GM12878 (cell line): ENCODE measurements at regions of chr20 and their contacts with region 1.

Region 1: GRCh38 chr20:39358052-39358451 is 395.9 kb downstream of the DHX35 start:
- DNase-seq: peak; percentile 36
- ATAC-seq: peak; percentile 95
- H3K4me3 ChIP-seq: no peak overlapping the region
- H3K27ac ChIP-seq: no peak overlapping the region
- H3K4me1 ChIP-seq: peaks cover 4% of the 10 kb centered on the region
- H3K27me3 ChIP-seq: no peaks in the 10 kb centered on the region
- CTCF ChIP-seq: no peak
- EP300 ChIP-seq: peak; percentile 35 to 41; a peak in 1 of 4 replicates
- POLR2A ChIP-seq: no peak
- RAD21 ChIP-seq: no peak

Region 2: DNA sequence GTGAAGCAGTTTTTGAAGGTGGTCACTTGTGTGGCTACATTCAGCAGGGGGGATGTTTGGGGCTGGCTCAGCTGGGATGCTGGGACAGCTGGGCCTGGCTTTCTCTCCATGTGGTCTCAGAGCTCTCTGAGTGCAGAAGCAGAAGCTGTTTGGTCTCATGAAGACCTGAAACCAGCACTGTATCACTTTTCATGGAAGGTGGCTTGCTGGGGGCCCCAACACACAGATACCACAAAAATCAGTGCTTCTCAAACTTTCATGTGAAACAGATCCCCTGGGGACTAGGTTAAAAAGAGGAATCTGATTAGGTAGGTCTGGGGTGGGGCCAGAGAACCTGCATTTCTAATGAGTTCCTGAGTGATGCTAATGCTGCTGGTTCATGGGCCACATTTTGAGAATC is 48.6 kb before region 1 on chr20:
- CTCF ChIA-PET with region 1: no interaction called
- POLR2A ChIA-PET with region 1: no interaction called
- RAD21 ChIA-PET with region 1: no interaction called
- SMC1A ChIA-PET with region 1: no interaction called
- in situ Hi-C with region 1: loop called (anchors 5 kb)
- intact Hi-C with region 1: no loop called
- DNase-seq: no peak
- ATAC-seq: no peak
- H3K4me3 ChIP-seq: no peak overlapping the region
- H3K27ac ChIP-seq: no peak overlapping the region
- H3K4me1 ChIP-seq: peaks cover 2% of the 10 kb centered on the region; the same call in 1 of the 2 replicates
- H3K27me3 ChIP-seq: peaks cover 0 to 2% of the 10 kb centered on the region in 2 experiments; a peak in 1 of 4 replicates
- CTCF ChIP-seq: no peak
- EP300 ChIP-seq: no peak
- POLR2A ChIP-seq: no peak
- RAD21 ChIP-seq: no peak

Region 3: DNA sequence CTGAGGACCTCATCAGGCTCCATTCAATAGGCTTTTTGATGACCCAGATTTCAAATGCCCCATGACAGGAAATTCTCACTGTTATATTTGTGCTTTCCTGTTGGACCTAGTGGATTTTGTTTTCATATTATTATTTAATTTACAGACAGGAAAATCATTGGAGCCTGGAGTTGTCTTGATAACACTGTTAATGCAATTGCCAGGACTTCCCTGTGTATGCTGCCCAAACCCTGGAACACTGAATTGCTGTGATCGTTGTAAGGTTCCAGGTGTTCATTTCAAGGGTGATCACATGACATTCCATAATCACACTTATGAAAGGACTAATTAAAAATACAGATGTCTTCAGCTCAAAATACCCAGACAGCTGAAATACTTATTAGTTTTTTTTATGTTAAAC is 387.3 kb after region 1 on chr20:
- CTCF ChIA-PET with region 1: no interaction called
- POLR2A ChIA-PET with region 1: no interaction called
- RAD21 ChIA-PET with region 1: no interaction called
- SMC1A ChIA-PET with region 1: no interaction called
- in situ Hi-C with region 1: no loop called
- intact Hi-C with region 1: no loop called
- DNase-seq: no peak
- ATAC-seq: no peak
- H3K4me3 ChIP-seq: no peak overlapping the region
- H3K27ac ChIP-seq: no peak overlapping the region
- H3K4me1 ChIP-seq: no peaks in the 10 kb centered on the region
- H3K27me3 ChIP-seq: no peaks in the 10 kb centered on the region
- CTCF ChIP-seq: no peak
- EP300 ChIP-seq: no peak
- POLR2A ChIP-seq: no peak
- RAD21 ChIP-seq: no peak